CD8-positive, alpha-beta memory T cell (primary cell): ENCODE measurements at regions of chr3 and their contacts with region 1.

Region 1: GRCh38 chr3:39288300-39288808 is 8.5 kb upstream of the CX3CR1 start:
- DNase-seq: peak; percentile 71 to 86 (median 73)
- H3K4me3 ChIP-seq: no peak overlapping the region
- H3K4me3 Mint-ChIP-seq: no peak overlapping the region
- H3K27ac ChIP-seq: no peak overlapping the region
- H3K27ac Mint-ChIP-seq: peak overlapping the region in 7 of 8 donors; percentile 9 to 87 (median 72)
- H3K4me1 ChIP-seq: peaks cover 13% of the 10 kb centered on the region
- H3K4me1 Mint-ChIP-seq: peaks cover 17 to 45% (median 32%) of the 10 kb centered on the region in 3 donors
- H3K27me3 ChIP-seq: no peaks in the 10 kb centered on the region
- H3K27me3 Mint-ChIP-seq: peaks cover 0 to 2% of the 10 kb centered on the region in 2 donors

Region 2: GRCh38 chr3:39126532-39127071 is 161.8 kb before region 1 on chr3:
- CTCF ChIA-PET with region 1: interaction called, 135 read pairs
- POLR2A ChIA-PET with region 1: no interaction called
- DNase-seq: no peak
- H3K4me3 ChIP-seq: no peak overlapping the region
- H3K4me3 Mint-ChIP-seq: no peak overlapping the region
- H3K27ac ChIP-seq: no peak overlapping the region
- H3K27ac Mint-ChIP-seq: peak overlapping the region in 2 of 8 donors; percentile 14 to 31
- H3K4me1 ChIP-seq: peaks cover 18% of the 10 kb centered on the region
- H3K4me1 Mint-ChIP-seq: peaks cover 21 to 29% (median 24%) of the 10 kb centered on the region in 3 donors
- H3K27me3 ChIP-seq: no peaks in the 10 kb centered on the region
- H3K27me3 Mint-ChIP-seq: peaks cover 0 to 2% of the 10 kb centered on the region in 2 donors

Region 3: GRCh38 chr3:39184081-39184967 is 104.0 kb before region 1 on chr3:
- CTCF ChIA-PET with region 1: interaction called, 253 read pairs
- POLR2A ChIA-PET with region 1: no interaction called
- DNase-seq: no peak
- H3K4me3 ChIP-seq: no peak overlapping the region
- H3K4me3 Mint-ChIP-seq: no peak overlapping the region
- H3K27ac ChIP-seq: no peak overlapping the region
- H3K27ac Mint-ChIP-seq: peak overlapping the region in 4 of 8 donors; percentile 22 to 70 (median 34)
- H3K4me1 ChIP-seq: peaks cover 18% of the 10 kb centered on the region
- H3K4me1 Mint-ChIP-seq: peaks cover 19 to 20% (median 19%) of the 10 kb centered on the region in 3 donors
- H3K27me3 ChIP-seq: no peaks in the 10 kb centered on the region
- H3K27me3 Mint-ChIP-seq: no peaks in the 10 kb centered on the region

Region 4: GRCh38 chr3:39208463-39209055 is 79.8 kb before region 1 on chr3:
- CTCF ChIA-PET with region 1: interaction called, 28 read pairs
- POLR2A ChIA-PET with region 1: no interaction called
- DNase-seq: peak in 4 of 5 donors; percentile 8 to 38 (median 32)
- H3K4me3 ChIP-seq: no peak overlapping the region
- H3K4me3 Mint-ChIP-seq: no peak overlapping the region
- H3K27ac ChIP-seq: no peak overlapping the region
- H3K27ac Mint-ChIP-seq: peak overlapping the region in 2 of 8 donors; percentile 45 to 66
- H3K4me1 ChIP-seq: peaks cover 4% of the 10 kb centered on the region
- H3K4me1 Mint-ChIP-seq: peaks cover 12 to 23% (median 20%) of the 10 kb centered on the region in 3 donors
- H3K27me3 ChIP-seq: no peaks in the 10 kb centered on the region
- H3K27me3 Mint-ChIP-seq: peaks cover 8 to 13% of the 10 kb centered on the region in 2 donors

Region 5: GRCh38 chr3:39267631-39268548 is 20.5 kb before region 1 on chr3:
- CTCF ChIA-PET with region 1: interaction called, 18 read pairs
- POLR2A ChIA-PET with region 1: no interaction called
- DNase-seq: peak; percentile 45 to 89 (median 71)
- H3K4me3 ChIP-seq: peak overlapping the region; percentile 40
- H3K4me3 Mint-ChIP-seq: peak overlapping the region; percentile 43 to 89 (median 81)
- H3K27ac ChIP-seq: peak overlapping the region; percentile 48
- H3K27ac Mint-ChIP-seq: peak overlapping the region; percentile 81 to 99 (median 96)
- H3K4me1 ChIP-seq: peaks cover 42% of the 10 kb centered on the region
- H3K4me1 Mint-ChIP-seq: peaks cover 73 to 95% (median 79%) of the 10 kb centered on the region in 3 donors
- H3K27me3 ChIP-seq: no peaks in the 10 kb centered on the region
- H3K27me3 Mint-ChIP-seq: no peaks in the 10 kb centered on the region